ENCODE measurements at regions of chr14 and their contacts with region 1.

Region 1: DNA sequence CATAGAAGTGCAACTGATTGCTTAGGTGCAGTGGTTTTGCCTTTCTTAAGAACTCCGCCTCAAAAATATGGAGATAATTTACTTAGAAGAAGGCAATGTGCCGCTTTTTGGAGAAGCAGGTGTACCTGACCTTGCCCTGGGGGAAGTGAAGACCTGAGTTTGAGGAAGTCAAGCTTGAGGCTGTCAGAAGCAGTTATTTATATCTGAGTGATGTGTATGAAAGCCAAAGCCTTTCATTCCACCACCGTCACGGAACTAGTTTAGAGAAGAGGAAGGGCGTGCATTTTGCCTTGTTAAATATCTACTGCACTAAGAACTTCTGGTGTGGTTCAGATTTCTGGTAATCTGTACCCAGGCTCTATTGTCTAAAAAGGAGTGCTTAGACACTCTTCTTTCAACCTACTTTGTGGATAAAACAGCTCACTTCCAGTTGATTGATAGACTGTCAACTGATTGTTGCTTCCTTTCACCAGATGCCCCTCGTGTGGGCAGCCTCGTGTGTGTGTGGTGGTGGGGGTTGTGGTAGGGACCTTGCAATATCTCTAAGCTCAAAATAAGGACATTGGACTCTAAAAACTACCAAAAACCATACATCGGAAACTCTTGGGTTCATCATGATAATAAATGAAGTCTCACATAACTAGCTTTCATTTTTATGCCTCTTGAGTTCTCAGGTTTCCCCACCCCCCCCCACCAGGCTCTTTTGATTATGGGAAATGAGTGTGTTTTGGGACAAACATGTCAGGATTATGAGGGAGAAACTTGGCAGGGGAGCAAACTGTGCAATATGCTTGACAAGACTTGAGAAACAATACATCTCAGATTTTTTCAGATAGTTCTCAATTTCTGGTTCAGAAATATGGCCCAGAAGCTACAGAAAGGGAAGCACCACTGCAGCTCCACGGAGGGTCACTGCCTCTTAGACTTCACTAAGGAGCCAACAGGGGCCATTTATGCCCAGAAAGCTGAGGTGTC is 78.6 kb downstream of the ARF6 start:
- DNase-seq: peak; percentile 88
- H3K4me3 Mint-ChIP-seq: peak overlapping the region; percentile 82
- H3K27ac Mint-ChIP-seq: peak overlapping the region; percentile 99
- H3K4me1 Mint-ChIP-seq: peaks cover 58% of the 10 kb centered on the region
- H3K27me3 Mint-ChIP-seq: no peaks in the 10 kb centered on the region

Region 2: DNA sequence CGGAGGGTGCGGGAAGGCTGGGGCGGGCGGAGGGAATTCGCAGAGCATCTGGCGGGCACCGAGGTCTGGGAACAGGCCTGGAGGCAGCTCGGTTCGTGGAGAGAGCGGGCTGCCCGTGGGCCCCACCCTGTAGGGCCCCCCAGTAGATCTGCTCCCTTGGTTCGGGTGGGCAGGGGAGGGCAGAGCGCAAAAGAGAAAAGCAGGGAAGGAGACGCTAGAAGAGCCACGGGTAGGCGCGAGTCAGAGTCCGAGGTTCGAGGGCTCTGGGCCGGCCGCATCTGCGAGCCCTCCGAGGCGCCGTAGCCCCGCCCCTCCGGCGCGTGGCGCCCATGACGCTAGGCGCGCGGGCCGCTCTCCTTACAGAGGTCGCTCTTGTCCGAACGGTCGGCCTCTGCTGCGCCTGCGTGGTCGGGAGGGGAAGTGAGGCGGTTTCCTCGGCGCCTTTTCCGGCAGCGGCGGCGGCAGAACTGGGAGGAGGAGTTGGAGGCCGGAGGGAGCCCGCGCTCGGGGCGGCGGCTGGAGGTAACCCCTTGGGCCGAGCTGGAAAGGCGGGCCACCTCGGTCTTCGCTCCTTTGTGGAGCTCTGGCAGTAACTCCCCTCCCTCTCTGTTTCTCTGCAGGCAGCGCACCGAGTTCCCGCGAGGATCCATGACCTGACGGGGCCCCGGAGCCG is 78.7 kb before region 1 on chr14 and contains the start of gene ARF6:
- intact Hi-C with region 1: no loop called
- DNase-seq: peak; percentile 99
- H3K4me3 Mint-ChIP-seq: peak within 1 kb of the TSS; percentile 96
- H3K27ac Mint-ChIP-seq: peak within 1 kb of the TSS; percentile 100
- H3K4me1 Mint-ChIP-seq: peaks cover 21% of the 10 kb centered on the region
- H3K27me3 Mint-ChIP-seq: no peaks in the 10 kb centered on the region
- total RNA-seq, gene ARF6: 154 and 160 TPM in 2 replicates

Region 3: GRCh38 chr14:49959822-49960408 is 11.5 kb before region 1 on chr14:
- intact Hi-C with region 1: loop called (anchors 1 kb)
- DNase-seq: peak; percentile 74
- H3K4me3 Mint-ChIP-seq: peak overlapping the region; percentile 39
- H3K27ac Mint-ChIP-seq: peak overlapping the region; percentile 18
- H3K4me1 Mint-ChIP-seq: peaks cover 39% of the 10 kb centered on the region
- H3K27me3 Mint-ChIP-seq: no peaks in the 10 kb centered on the region

Region 4: GRCh38 chr14:49982501-49982951 is 11.1 kb after region 1 on chr14:
- intact Hi-C with region 1: loop called (anchors 1 kb)
- DNase-seq: no peak
- H3K4me3 Mint-ChIP-seq: no peak overlapping the region
- H3K27ac Mint-ChIP-seq: peak overlapping the region; percentile 78
- H3K4me1 Mint-ChIP-seq: peaks cover 59% of the 10 kb centered on the region
- H3K27me3 Mint-ChIP-seq: no peaks in the 10 kb centered on the region

Region 5: DNA sequence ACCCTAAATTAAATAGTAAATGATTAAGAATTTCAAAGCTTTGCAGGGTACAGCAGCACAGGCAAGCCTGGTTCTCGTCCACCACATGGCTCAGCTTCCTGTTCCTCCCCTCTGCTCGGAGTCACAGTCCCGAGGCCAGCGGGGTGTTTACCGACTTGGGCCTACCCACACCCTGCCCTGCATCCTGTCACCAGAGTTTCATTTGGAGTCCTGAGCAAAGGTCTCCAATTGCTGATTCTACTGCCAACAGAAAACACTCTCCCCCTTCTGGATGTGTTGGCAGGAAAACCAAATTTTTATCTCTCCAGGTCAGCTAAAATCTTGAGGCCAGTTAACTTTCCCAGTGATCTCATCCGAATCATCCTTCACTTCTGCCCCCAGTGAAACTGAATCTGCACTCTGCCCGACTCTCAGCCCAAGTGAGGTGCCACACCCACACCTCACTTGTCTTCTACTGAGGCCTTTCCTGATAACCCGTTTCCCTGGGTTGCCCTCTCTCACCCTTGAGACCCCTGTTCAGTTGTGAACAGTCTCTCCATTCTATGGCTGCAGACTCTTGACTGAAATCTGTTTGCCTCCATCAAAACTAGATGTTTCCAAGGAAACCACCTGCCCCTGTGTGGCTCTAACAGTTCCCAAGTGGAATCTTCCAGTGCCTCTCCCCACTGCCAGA is 73.7 kb after region 1 on chr14:
- intact Hi-C with region 1: no loop called
- DNase-seq: peak; percentile 93
- H3K4me3 Mint-ChIP-seq: peak overlapping the region; percentile 48
- H3K27ac Mint-ChIP-seq: peak overlapping the region; percentile 93
- H3K4me1 Mint-ChIP-seq: peaks cover 55% of the 10 kb centered on the region
- H3K27me3 Mint-ChIP-seq: no peaks in the 10 kb centered on the region